H1 (cell line): ENCODE measurements at regions of chr16 and their contacts with region 1.

Region 1: GRCh38 chr16:23452572-23453337 is at the start of gene COG7:
- DNase-seq: peak; percentile 44 to 94
- H3K4me3 ChIP-seq: peak within 1 kb of the TSS; percentile 76 to 98 (median 82)
- H3K27ac ChIP-seq: peak within 1 kb of the TSS; percentile 61; the same call in 1 of the 2 replicates
- H3K4me1 ChIP-seq: peaks cover 0 to 3% (median 1%) of the 10 kb centered on the region in 4 experiments; a peak in 3 of 7 replicates
- H3K27me3 ChIP-seq: no peaks in the 10 kb centered on the region
- CTCF ChIP-seq: no peak
- EP300 ChIP-seq: no peak
- POLR2A ChIP-seq: peak in 1 of 2 experiments; percentile 69; a peak in 2 of 3 replicates
- RAD21 ChIP-seq: no peak
- total RNA-seq, gene COG7: 17.2 TPM in 2 replicates

Region 2: GRCh38 chr16:23464196-23464595 is 11.4 kb after region 1 on chr16:
- CTCF ChIA-PET with region 1: no interaction called
- POLR2A ChIA-PET with region 1: interaction called, 12 read pairs
- DNase-seq: no peak
- H3K4me3 ChIP-seq: no peak overlapping the region
- H3K27ac ChIP-seq: no peak overlapping the region
- H3K4me1 ChIP-seq: no peaks in the 10 kb centered on the region
- H3K27me3 ChIP-seq: no peaks in the 10 kb centered on the region
- CTCF ChIP-seq: no peak
- EP300 ChIP-seq: no peak
- POLR2A ChIP-seq: no peak
- RAD21 ChIP-seq: no peak